ENCODE measurements at regions of chr12 and their contacts with region 1.

Region 1: DNA sequence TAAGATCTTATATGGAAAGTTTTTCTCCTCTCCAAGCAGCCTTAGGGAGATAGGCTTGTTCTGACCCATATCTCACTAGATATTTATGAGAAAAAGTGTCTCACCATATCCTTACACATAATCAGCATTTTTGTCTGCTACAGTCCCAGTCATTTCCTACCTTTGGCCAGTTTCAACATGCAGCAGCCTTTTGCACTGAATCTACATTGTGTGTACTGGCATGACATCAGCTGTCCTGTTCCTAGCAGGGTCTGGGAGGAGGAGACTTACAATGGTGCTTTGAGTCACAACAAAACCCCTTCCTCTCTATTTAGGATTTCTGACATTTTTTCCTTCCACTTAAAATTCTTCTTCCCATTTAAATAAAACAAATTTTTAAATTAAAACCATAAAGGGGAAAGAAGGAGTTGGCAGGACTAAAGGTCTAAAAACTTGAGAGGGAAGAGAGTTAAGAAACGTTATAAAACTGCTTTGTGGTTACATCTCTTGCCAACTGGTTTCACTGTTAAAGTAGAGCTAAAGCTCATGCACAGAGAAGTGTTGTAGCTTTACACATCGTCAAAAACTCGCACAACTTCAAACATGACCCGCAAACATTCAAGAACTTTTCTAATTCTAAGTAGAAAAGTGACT is 53.3 kb upstream of the CERS5 start:
- DNase-seq: no peak

Region 2: GRCh38 chr12:50257686-50258551 is 37.4 kb after region 1 on chr12:
- intact Hi-C with region 1: loop called (anchors 2 kb)
- DNase-seq: no peak

Measured in cardiac septum (tissue), 1 donor.